ENCODE measurements at regions of chr2 and their contacts with region 1.

Region 1: GRCh38 chr2:14220101-14220500 is 412.4 kb upstream of the LRATD1 start:
- DNase-seq: no peak
- ATAC-seq: no peak
- H3K4me3 ChIP-seq: no peak overlapping the region
- H3K27ac ChIP-seq: no peak overlapping the region
- H3K4me1 ChIP-seq: no peaks in the 10 kb centered on the region
- H3K27me3 ChIP-seq: no peaks in the 10 kb centered on the region
- CTCF ChIP-seq: no peak
- POLR2A ChIP-seq: no peak

Region 2: DNA sequence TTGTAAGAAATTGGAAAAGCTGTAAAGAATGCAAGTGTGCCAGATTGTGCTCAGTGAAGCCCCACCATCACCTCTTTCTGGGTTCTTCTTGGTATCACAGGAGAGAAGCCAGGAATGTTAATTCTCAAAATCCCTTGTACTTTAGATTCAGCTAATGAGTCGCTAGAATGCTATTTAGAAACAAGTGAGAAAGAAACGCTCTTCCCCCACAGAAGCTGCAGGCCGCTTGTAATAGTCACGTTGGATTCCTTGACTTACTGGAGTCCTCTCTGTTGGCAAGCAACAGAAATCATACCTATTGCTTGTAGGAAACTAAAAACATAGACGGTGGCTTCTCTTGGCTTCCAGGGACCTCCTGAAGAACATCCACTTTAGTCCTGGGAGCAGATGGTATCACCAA is 36.8 kb after region 1 on chr2:
- intact Hi-C with region 1: loop called in 1 of 10 experiments (anchors 2 kb)
- DNase-seq: no peak
- ATAC-seq: no peak
- H3K4me3 ChIP-seq: no peak overlapping the region
- H3K27ac ChIP-seq: no peak overlapping the region
- H3K4me1 ChIP-seq: no peaks in the 10 kb centered on the region
- H3K27me3 ChIP-seq: no peaks in the 10 kb centered on the region
- CTCF ChIP-seq: no peak
- POLR2A ChIP-seq: no peak

Measured in heart left ventricle (tissue), 16 donors.